ENCODE measurements at regions of chr11 and their contacts with region 1.

Region 1: GRCh38 chr11:9003573-9004309 is at the start of gene NRIP3:
- DNase-seq: peak; percentile 73
- H3K4me3 Mint-ChIP-seq: peak within 1 kb of the TSS; percentile 83
- H3K27ac Mint-ChIP-seq: peak within 1 kb of the TSS; percentile 76
- H3K4me1 Mint-ChIP-seq: peaks cover 31% of the 10 kb centered on the region
- H3K27me3 Mint-ChIP-seq: peaks cover 36% of the 10 kb centered on the region
- total RNA-seq, gene NRIP3: 4.4 and 4.8 TPM in 2 replicates

Region 2: DNA sequence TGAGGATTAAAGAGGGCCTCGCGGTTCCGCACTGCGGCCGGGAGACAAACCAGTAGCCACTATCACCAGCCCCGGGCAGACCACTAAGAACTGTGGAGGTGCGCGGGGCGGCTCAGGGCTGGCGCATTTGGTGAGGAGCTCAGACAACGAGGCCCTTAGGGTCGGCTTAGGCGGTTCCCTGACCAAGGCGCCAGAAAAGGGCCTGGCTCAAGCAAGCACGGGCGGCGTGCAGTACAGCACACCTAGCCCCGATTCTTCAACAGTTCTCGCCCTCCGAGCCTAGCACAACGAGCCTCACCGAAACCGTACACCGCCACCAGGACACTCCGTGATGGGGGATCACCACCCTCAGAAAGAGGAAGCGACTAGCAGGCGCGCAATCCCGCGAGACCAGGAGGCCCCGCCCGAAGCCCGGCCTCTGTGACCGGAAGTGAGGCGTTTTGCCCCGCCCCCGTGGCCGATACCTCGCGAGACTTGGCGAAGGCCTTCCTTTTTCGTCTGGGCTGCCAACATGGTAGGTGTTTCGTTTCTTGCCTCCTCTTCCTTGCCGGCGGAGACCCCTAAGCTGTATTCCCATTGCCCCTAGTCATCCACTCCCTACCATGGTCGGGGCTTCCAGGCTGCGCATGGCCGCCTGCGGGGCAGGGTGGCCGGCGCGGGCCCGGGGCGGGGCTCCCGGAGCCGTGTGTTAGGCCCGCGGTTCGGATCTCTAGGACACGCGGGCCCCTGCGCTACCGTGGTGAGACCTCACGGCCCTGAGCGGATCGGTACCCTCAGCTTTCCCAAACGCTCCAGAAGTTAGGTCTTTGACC is 321.2 kb before region 1 on chr11 and contains the starts of genes RPL27A and TRIM66:
- intact Hi-C with region 1: loop called (anchors 2 kb)
- DNase-seq: peak; percentile 99
- H3K4me3 Mint-ChIP-seq: peak within 1 kb of the TSS; percentile 97
- H3K27ac Mint-ChIP-seq: peak within 1 kb of the TSS; percentile 95
- H3K4me1 Mint-ChIP-seq: peaks cover 42% of the 10 kb centered on the region
- H3K27me3 Mint-ChIP-seq: no peaks in the 10 kb centered on the region
- total RNA-seq, gene RPL27A: 679 and 691 TPM in 2 replicates
- total RNA-seq, gene TRIM66: 11.7 and 14.2 TPM in 2 replicates

Region 3: DNA sequence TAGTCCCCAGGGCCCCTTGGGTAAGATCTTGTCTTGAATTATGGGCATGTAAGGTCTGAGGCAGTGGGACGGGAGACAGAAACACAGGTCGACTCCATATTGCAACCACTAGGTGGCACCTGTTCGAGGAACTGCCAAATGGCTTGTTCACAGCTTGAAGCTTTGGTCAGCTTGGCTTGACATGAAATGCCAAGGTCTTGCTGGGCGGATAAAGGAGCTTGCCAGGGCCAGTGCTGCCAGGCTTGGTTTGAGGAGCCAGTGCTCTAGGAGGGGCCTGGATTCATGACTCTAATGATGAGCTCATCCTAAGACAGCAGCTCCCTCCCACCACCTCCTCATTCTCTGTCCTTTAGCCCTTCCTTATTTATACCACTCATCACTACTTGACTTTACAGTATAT is 11.9 kb after region 1 on chr11:
- intact Hi-C with region 1: loop called (anchors 2 kb)
- DNase-seq: peak; percentile 44
- H3K4me3 Mint-ChIP-seq: no peak overlapping the region
- H3K27ac Mint-ChIP-seq: no peak overlapping the region
- H3K4me1 Mint-ChIP-seq: peaks cover 31% of the 10 kb centered on the region
- H3K27me3 Mint-ChIP-seq: peaks cover 15% of the 10 kb centered on the region

Region 4: DNA sequence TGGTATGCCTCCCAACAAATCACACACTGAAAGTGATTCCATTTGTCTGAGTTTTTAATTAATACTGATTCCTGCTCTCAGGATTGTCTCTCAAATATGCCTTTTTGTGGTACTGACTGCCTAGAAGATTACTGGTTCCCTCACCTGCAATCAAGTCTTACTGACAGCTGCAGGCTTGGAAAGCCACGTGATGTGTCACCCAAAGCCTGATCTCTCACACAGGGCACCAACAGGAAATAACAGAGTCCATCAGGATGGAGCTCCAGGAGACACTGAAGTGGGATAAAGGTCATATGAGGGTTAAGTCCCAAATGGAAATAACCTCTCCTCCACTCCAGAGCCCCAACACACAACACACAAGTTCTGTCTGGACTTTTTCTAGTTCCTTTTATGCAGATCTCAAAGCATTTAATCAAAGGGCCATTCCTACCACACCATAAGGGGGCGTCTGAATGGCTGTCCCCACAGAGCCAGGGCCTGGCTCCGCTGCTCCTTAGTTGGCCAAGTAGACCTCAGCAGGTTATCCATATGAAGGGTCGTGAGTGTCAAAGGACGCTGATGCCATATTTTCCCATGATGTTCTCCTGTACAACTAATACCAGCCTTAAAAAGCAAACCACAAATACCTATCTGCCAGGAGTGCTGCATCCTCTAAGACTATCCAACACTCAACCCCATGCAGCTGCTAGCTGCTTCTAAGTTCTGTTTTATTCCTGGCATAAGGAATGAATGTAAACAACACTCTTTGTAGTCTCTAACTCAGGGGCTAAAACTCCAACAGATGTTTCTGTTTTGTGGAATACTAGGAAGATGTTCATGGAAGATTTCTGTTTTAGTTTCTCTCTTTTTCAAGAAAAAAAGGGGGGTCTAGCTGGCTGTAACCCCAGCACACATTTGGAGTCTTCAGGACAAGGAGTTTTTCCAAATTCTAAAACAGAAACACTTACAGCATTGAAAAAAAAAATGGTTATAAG is 74.7 kb after region 1 on chr11:
- intact Hi-C with region 1: no loop called
- DNase-seq: no peak
- H3K4me3 Mint-ChIP-seq: no peak overlapping the region
- H3K27ac Mint-ChIP-seq: no peak overlapping the region
- H3K4me1 Mint-ChIP-seq: peaks cover 6% of the 10 kb centered on the region
- H3K27me3 Mint-ChIP-seq: peaks cover 37% of the 10 kb centered on the region

Region 5: GRCh38 chr11:9137293-9138132 is 133.8 kb after region 1 on chr11:
- intact Hi-C with region 1: loop called (anchors 5 kb)
- DNase-seq: peak; percentile 57
- H3K4me3 Mint-ChIP-seq: peak overlapping the region; percentile 4
- H3K27ac Mint-ChIP-seq: peak overlapping the region; percentile 72
- H3K4me1 Mint-ChIP-seq: peaks cover 29% of the 10 kb centered on the region
- H3K27me3 Mint-ChIP-seq: no peaks in the 10 kb centered on the region

Region 6: GRCh38 chr11:9363954-9364912 is 360.5 kb after region 1 on chr11:
- intact Hi-C with region 1: loop called (anchors 5 kb)
- DNase-seq: peak; percentile 76
- H3K4me3 Mint-ChIP-seq: peak overlapping the region; percentile 82
- H3K27ac Mint-ChIP-seq: peak overlapping the region; percentile 90
- H3K4me1 Mint-ChIP-seq: peaks cover 28% of the 10 kb centered on the region
- H3K27me3 Mint-ChIP-seq: peaks cover 5% of the 10 kb centered on the region

Region 7: GRCh38 chr11:9573052-9573774 is 569.5 kb after region 1 on chr11 and contains the start of gene WEE1:
- intact Hi-C with region 1: loop called (anchors 5 kb)
- DNase-seq: peak; percentile 99
- H3K4me3 Mint-ChIP-seq: peak within 1 kb of the TSS; percentile 93
- H3K27ac Mint-ChIP-seq: peak within 1 kb of the TSS; percentile 88
- H3K4me1 Mint-ChIP-seq: peaks cover 42% of the 10 kb centered on the region
- H3K27me3 Mint-ChIP-seq: peaks cover 7% of the 10 kb centered on the region
- total RNA-seq, gene WEE1: 51.4 and 54.2 TPM in 2 replicates